Calu3 (cell line): ENCODE measurements at regions of chr1 and their contacts with region 1.

Region 1: GRCh38 chr1:68442822-68443556 is 6.8 kb downstream of the RPE65 start:
- DNase-seq: peak; percentile 67
- H3K4me3 Mint-ChIP-seq: no peak overlapping the region
- H3K27ac Mint-ChIP-seq: no peak overlapping the region
- H3K4me1 Mint-ChIP-seq: peaks cover 24% of the 10 kb centered on the region
- H3K27me3 Mint-ChIP-seq: no peaks in the 10 kb centered on the region
- CTCF ChIP-seq: peak; percentile 41

Region 2: GRCh38 chr1:68321084-68321685 is 121.8 kb before region 1 on chr1:
- CTCF ChIA-PET with region 1: no interaction called
- intact Hi-C with region 1: loop called (anchors 2 kb)
- DNase-seq: peak; percentile 84
- H3K4me3 Mint-ChIP-seq: no peak overlapping the region
- H3K27ac Mint-ChIP-seq: no peak overlapping the region
- H3K4me1 Mint-ChIP-seq: peaks cover 5% of the 10 kb centered on the region
- H3K27me3 Mint-ChIP-seq: no peaks in the 10 kb centered on the region
- CTCF ChIP-seq: peak; percentile 74

Region 3: DNA sequence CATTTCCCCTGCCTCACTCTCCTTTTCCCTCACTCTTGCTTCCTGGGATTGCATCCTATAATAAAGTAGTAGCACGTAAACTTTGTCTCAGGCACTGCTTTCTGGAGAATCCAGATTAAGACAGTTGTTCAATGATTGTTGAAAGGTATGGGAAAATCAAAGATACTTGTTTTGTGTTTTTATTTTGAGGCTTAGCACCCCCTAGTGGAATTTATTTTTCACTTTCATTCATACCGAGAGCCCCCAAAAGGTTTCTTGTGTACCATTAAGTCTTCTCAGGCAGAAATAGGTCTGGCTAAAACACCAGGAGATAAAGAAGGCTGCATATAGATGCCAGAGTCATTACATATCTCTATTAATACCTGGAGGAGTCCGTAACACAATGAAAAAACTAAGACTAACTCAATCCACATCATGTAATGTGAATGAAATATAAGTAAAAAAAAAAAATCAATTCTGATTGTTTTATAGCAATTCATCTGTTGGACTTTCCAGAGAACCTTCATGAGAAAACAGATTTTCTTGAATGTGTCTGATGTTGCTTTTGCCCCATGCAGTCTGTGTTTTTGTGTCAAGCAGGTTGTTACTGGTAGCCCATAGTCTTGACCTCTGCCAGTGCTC is 96.7 kb before region 1 on chr1:
- CTCF ChIA-PET with region 1: no interaction called
- intact Hi-C with region 1: loop called (anchors 5 kb)
- DNase-seq: no peak
- H3K4me3 Mint-ChIP-seq: no peak overlapping the region
- H3K27ac Mint-ChIP-seq: peak overlapping the region; percentile 30
- H3K4me1 Mint-ChIP-seq: peaks cover 12% of the 10 kb centered on the region
- H3K27me3 Mint-ChIP-seq: no peaks in the 10 kb centered on the region
- CTCF ChIP-seq: peak; percentile 25

Region 4: DNA sequence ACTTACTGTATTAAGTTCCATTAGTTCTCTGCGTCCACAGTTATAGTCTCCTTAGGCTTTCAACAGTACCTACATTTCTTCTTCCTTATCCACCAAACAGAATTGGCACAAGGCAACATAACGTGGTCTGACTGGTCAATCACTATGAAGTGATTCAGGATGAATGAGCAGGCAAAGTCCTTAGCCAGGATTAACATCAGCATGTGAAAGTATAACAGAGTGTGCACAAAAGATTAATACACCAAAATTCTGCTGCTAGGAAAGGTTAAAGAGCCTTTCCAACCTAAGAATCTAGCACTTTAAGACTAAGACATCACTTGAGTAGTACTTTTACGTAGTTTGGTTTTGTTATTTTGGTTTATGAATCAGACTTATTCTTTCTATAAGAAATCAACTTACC is 38.1 kb after region 1 on chr1:
- CTCF ChIA-PET with region 1: no interaction called
- intact Hi-C with region 1: no loop called
- DNase-seq: no peak
- H3K4me3 Mint-ChIP-seq: no peak overlapping the region
- H3K27ac Mint-ChIP-seq: no peak overlapping the region
- H3K4me1 Mint-ChIP-seq: peaks cover 7% of the 10 kb centered on the region
- H3K27me3 Mint-ChIP-seq: no peaks in the 10 kb centered on the region
- CTCF ChIP-seq: no peak